A673 (cell line): ENCODE measurements at regions of chr14 and their contacts with region 1.

Region 1: DNA sequence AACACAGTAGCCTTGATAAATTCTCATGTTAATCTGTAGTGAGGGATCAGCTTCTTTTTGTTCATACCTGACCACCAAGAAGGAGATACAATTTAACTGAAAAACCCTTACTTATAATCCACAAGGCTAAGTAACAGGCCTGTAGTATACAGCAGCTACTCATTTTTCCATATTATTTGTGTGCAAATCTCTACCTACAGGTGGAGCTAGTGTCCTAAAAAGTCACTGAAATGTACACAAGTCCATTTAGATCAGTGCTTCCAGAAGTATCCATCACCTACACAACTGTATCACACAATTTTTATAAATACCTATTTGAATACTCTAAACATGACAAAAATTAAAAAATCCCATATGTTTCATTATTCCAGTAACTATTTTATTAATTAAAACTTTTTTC is 173.2 kb downstream of the SLC35F4 start:
- DNase-seq: peak; percentile 74
- H3K4me3 ChIP-seq: no peak overlapping the region
- H3K27ac ChIP-seq: no peak overlapping the region
- H3K4me1 ChIP-seq: no peaks in the 10 kb centered on the region
- H3K27me3 ChIP-seq: no peaks in the 10 kb centered on the region
- CTCF ChIP-seq: peak; percentile 70

Region 2: DNA sequence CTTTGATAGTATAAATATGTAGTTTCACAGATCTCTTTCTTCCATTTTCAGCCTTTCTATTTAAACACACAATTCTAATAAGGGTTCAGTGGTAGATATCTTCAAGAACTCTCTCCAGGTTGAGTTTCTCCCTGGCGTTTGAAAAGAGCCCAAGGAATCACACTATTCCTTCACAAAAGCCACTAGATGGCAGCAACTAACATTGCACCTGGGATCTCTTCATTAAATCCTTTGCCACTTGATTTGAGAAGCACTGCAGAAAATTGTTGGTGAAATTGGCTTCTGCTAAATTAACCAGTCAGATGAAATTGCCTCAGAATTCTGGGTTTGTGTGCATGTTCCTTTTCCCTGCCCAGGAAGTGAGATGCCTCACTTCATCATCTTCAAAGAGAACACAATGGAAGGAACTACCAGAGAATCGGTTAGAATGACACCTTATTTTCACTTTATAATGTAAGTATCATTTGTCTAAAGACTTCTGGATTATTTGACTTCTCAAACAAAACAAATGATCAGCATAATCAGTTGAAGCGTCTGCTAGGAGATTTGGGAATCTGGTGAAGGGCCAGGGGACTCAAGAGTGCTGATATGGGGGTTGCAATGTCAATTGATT is 205.8 kb before region 1 on chr14:
- CTCF ChIA-PET with region 1: no interaction called
- POLR2A ChIA-PET with region 1: no interaction called
- intact Hi-C with region 1: loop called (anchors 5 kb)
- DNase-seq: peak; percentile 82
- H3K4me3 ChIP-seq: no peak overlapping the region
- H3K27ac ChIP-seq: no peak overlapping the region
- H3K4me1 ChIP-seq: peaks cover 14% of the 10 kb centered on the region
- H3K27me3 ChIP-seq: no peaks in the 10 kb centered on the region
- CTCF ChIP-seq: peak; percentile 82

Region 3: DNA sequence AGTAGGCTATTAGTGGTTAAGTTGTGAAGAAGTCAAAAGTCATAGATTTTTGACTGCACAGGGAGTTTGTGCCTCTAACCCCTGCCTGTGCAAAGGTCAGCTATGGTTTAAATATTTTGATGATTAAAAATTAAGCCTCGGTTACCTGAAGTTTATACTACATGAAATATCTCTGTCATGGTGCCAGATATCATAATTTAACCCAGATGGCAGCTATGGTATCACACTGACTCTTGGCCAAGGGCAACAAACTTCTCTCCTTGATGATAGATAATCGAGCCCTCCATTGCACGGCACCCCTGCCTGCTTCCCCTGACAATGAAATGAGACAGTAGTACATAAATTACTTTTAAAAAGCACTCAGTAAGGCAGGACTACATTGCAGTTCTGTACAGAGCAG is 92.4 kb after region 1 on chr14:
- CTCF ChIA-PET with region 1: no interaction called
- POLR2A ChIA-PET with region 1: no interaction called
- intact Hi-C with region 1: no loop called
- DNase-seq: no peak
- H3K4me3 ChIP-seq: no peak overlapping the region
- H3K27ac ChIP-seq: no peak overlapping the region
- H3K4me1 ChIP-seq: no peaks in the 10 kb centered on the region
- H3K27me3 ChIP-seq: no peaks in the 10 kb centered on the region
- CTCF ChIP-seq: no peak

Region 4: DNA sequence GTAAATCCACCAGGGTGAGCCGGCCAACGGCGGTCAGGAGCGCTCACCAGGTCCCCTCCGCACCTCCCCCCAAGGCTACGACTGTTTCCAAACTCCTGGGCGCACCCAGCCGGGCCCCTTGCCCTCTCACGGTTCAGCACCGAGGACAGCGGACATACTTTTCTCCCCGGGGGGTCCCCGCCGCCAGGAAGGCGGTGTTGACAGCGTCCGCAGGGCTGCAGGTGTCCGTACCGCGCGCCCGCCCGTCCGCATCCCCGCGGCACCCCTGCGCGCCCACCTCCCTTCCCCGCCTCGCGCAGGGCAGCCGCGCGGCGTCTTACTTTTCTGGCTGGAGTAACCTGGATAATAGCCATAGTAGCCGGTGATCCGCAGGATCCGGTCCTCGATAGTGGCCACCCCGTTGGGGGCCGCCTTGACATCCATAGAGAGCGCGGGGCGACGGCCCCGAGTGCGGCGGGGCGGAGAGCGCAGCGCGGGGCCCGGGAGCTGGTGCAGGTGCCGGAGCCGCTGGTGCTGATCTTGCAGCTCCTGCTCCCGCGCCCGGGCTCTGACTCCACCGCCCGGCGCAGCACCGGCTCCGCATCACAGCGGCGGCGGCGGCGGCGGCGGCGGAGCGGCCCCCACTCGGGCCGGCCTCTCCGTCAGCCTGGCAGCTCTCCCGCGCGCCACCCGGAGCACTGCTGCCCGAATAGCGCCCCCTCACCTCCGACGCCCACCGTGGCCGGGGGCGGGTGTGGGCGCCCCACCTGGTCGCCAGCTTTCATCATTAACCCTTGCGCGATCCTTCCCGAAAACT is 172.9 kb after region 1 on chr14 and contains the start of gene SLC35F4:
- CTCF ChIA-PET with region 1: interaction called, 3 read pairs
- POLR2A ChIA-PET with region 1: no interaction called
- intact Hi-C with region 1: loop called (anchors 5 kb)
- DNase-seq: peak; percentile 73
- H3K4me3 ChIP-seq: peak within 1 kb of the TSS; percentile 52
- H3K27ac ChIP-seq: no peak within 1 kb of the TSS
- H3K4me1 ChIP-seq: peaks cover 5% of the 10 kb centered on the region
- H3K27me3 ChIP-seq: no peaks in the 10 kb centered on the region
- CTCF ChIP-seq: 0 out of 2 replicates have a peak, but pooled peaks have one; percentile 19
- total RNA-seq, gene SLC35F4: 0.59 TPM in 1 of 2 replicates, not detected in the other

Region 5: DNA sequence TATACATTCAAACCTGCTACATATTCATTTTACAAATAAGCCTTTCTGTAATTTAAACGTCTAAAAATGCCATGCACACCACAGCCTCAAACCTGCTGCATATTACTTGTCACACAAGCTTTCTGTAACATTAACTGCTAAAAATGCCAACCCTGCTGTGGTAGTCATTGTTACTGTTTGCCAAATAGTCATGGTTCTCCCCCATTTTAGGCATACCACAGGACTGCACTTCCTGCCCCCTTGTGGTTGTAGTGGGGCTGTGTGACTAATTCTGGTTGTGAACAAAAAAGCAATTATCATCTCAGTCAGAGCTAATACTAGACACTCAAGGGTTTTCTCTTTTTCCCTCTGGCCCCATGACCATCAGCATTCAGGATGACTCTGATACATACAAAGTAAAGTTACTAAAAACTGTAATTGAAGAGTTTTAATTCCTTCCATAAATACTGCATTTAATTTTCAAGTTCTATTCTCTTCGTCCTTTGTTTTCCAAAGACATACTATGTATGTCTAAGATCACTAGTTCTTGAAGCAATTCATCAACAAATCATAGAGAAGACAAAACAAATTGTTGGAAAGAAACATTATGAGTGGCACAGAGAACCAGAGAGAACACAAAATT is 178.9 kb after region 1 on chr14:
- CTCF ChIA-PET with region 1: interaction called, 10 read pairs
- POLR2A ChIA-PET with region 1: no interaction called
- intact Hi-C with region 1: loop called (anchors 5 kb)
- DNase-seq: peak; percentile 90
- H3K4me3 ChIP-seq: no peak overlapping the region
- H3K27ac ChIP-seq: no peak overlapping the region
- H3K4me1 ChIP-seq: peaks cover 14% of the 10 kb centered on the region
- H3K27me3 ChIP-seq: no peaks in the 10 kb centered on the region
- CTCF ChIP-seq: peak; percentile 91

Region 6: GRCh38 chr14:58171090-58171489 is 478.4 kb after region 1 on chr14:
- CTCF ChIA-PET with region 1: no interaction called
- POLR2A ChIA-PET with region 1: no interaction called
- intact Hi-C with region 1: loop called (anchors 2 kb)
- DNase-seq: peak; percentile 88
- H3K4me3 ChIP-seq: no peak overlapping the region
- H3K27ac ChIP-seq: no peak overlapping the region
- H3K4me1 ChIP-seq: peaks cover 12% of the 10 kb centered on the region
- H3K27me3 ChIP-seq: no peaks in the 10 kb centered on the region
- CTCF ChIP-seq: no peak